Mammary epithelial cell (primary cell): ENCODE measurements at regions of chr9 and their contacts with region 1.

Region 1: DNA sequence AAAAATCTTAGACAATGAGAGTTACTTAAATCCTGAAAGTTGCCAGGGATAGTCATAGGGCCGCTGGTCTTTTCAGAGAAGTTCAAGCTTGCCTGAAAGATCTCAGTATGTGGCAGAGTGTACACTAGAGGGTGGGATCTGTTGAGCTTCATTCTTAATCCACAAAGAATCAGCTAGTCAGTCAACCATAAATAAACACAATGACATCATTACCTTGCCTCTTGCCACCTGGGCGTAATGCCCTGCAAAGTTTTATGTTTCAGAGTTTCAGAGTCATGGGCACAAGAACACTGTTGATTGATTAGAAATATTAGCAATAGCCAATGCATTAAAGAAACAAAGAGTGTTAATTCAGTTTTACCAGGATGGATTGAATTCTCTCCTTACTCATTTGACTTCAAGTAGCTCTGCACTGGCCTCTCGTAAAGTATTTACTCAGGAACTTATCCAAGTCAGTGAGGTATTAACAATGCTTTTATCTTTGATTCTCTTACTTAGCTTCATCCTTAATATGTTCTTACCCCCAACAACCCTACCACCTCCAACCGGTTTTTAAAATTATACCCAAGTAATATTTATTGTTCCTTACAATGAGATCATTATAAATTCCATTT is 14.3 kb upstream of the ANXA1 start:
- DNase-seq: peak; percentile 81
- H3K4me3 ChIP-seq: peak overlapping the region in 1 of 3 experiments; percentile 13
- H3K27ac ChIP-seq: peak overlapping the region; percentile 47
- H3K4me1 ChIP-seq: peaks cover 35% of the 10 kb centered on the region
- H3K27me3 ChIP-seq: no peaks in the 10 kb centered on the region
- CTCF ChIP-seq: peak; percentile 1 to 14

Region 2: GRCh38 chr9:73059247-73059646 is 78.1 kb before region 1 on chr9:
- CTCF ChIA-PET with region 1: interaction called, 14 read pairs
- dilution Hi-C with region 1: no loop called
- in situ Hi-C with region 1: no loop called
- intact Hi-C with region 1: no loop called
- DNase-seq: no peak
- H3K4me3 ChIP-seq: no peak overlapping the region
- H3K27ac ChIP-seq: no peak overlapping the region
- H3K4me1 ChIP-seq: no peaks in the 10 kb centered on the region
- H3K27me3 ChIP-seq: peaks cover under 1% of the 10 kb centered on the region
- CTCF ChIP-seq: no peak